Activated CD8-positive, alpha-beta T cell treated with anti-CD3 and anti-CD28 coated beads, Interleukin-2, amount 10 ng/mL, durations not matched to agents 7 days and 5 days (primary cell): ENCODE measurements at regions of chr10 and their contacts with region 1.

Region 1: DNA sequence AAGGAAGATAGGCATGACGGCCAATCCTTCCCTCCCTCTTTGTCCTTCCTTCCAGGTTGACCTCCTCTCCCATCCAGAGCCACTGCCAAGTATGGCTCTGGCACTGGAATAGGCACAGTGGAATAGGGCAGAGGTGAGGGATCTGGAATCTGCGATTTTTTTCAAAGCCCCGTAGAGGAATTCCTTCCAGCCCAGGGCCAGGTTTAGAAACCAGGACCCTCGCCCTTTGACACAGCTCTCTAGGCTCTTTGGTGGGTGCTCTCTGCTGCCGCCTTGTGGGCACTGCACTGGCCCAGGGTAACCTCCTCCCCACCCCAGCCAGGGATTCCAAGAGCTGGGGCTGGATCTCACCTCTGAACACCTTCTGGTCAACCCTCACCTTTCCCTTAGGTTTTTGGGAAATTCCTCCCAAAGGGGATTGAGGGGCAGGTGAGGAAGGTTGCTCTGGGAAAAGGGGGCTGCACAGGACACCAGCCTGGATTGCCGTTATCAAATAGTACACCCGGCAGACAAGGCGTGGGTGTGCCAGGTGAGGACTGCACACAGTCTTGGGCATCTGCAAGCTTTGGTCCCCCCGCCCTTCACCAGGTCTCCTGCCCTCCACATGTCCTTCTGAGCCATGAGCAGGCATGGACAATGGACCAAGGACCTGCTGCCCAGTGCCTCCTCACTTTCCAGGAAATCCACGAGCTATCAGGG is 22.8 kb downstream of the C10orf105 start:
- DNase-seq: peak; percentile 72
- ATAC-seq: peak; percentile 67
- H3K4me3 Mint-ChIP-seq: no peak overlapping the region
- H3K27ac Mint-ChIP-seq: peak overlapping the region; percentile 52
- H3K4me1 Mint-ChIP-seq: peaks cover 68% of the 10 kb centered on the region
- H3K27me3 Mint-ChIP-seq: no peaks in the 10 kb centered on the region

Region 2: GRCh38 chr10:71319042-71319799 is 377.6 kb before region 1 on chr10 and contains the start of gene SLC29A3:
- CTCF ChIA-PET with region 1: interaction called, 29 read pairs
- POLR2A ChIA-PET with region 1: no interaction called
- DNase-seq: peak; percentile 90
- ATAC-seq: peak; percentile 96
- H3K4me3 Mint-ChIP-seq: peak within 1 kb of the TSS; percentile 88
- H3K27ac Mint-ChIP-seq: peak within 1 kb of the TSS; percentile 75
- H3K4me1 Mint-ChIP-seq: peaks cover 37% of the 10 kb centered on the region
- H3K27me3 Mint-ChIP-seq: peaks cover 3% of the 10 kb centered on the region
- total RNA-seq, gene SLC29A3: 3.0 to 3.4 TPM

Region 3: GRCh38 chr10:71663311-71663710 is 33.5 kb before region 1 on chr10:
- CTCF ChIA-PET with region 1: interaction called, 10 read pairs
- POLR2A ChIA-PET with region 1: no interaction called
- DNase-seq: no peak
- ATAC-seq: no peak
- H3K4me3 Mint-ChIP-seq: no peak overlapping the region
- H3K27ac Mint-ChIP-seq: no peak overlapping the region
- H3K4me1 Mint-ChIP-seq: peaks cover 29% of the 10 kb centered on the region
- H3K27me3 Mint-ChIP-seq: peaks cover 4% of the 10 kb centered on the region

Region 4: GRCh38 chr10:71713135-71714030 is 16.6 kb after region 1 on chr10:
- CTCF ChIA-PET with region 1: interaction called, 121 read pairs
- POLR2A ChIA-PET with region 1: interaction called, 5 read pairs
- DNase-seq: peak; percentile 50
- ATAC-seq: peak; percentile 72
- H3K4me3 Mint-ChIP-seq: peak overlapping the region; percentile 80
- H3K27ac Mint-ChIP-seq: peak overlapping the region; percentile 99
- H3K4me1 Mint-ChIP-seq: peaks cover 68% of the 10 kb centered on the region
- H3K27me3 Mint-ChIP-seq: no peaks in the 10 kb centered on the region

Region 5: GRCh38 chr10:71748671-71749191 is 52.0 kb after region 1 on chr10:
- CTCF ChIA-PET with region 1: interaction called, 27 read pairs
- POLR2A ChIA-PET with region 1: interaction called, 6 read pairs
- DNase-seq: peak; percentile 94
- ATAC-seq: peak; percentile 83
- H3K4me3 Mint-ChIP-seq: peak overlapping the region; percentile 61
- H3K27ac Mint-ChIP-seq: peak overlapping the region; percentile 93
- H3K4me1 Mint-ChIP-seq: peaks cover 98% of the 10 kb centered on the region
- H3K27me3 Mint-ChIP-seq: no peaks in the 10 kb centered on the region

Region 6: DNA sequence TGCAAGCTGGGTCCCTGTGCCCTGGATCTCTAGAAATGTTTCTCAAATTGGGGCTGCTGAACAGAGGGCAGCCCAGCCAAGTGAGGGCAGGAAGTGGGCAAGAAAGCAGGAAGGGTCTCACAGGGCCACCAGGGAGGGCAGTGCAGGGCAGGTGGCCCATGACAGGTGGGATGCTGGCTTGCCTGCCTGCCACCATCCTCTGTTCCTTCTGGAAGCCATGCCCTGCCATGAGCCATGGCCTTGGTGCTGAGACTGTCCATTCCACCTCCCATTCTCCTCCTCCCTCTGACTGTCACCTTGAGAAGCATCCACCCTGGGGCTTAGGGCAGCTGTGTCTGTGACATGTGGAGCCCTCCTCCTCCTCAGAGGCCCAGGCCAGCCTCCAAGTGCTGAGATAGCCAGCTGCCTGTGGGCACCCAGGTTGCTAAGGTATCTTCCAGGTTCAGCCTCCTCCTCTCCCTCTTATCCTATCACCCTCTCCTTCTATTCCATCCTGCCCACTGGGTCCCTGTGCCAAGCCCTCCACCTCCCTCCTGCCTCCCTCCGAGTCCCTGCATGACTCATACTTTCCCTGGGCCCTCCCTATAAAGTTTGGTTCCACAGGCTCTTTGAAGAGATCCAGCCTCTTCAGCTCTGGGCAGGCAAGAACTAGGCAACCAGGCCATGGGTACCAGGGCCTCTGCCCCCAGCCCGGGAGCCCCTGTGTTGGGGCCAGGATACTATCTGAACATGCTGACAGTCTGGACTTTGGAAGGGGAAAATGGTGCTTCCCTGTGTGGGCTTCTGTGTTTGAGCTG is 75.2 kb after region 1 on chr10:
- CTCF ChIA-PET with region 1: interaction called, 54 read pairs
- POLR2A ChIA-PET with region 1: interaction called, 9 read pairs
- DNase-seq: peak; percentile 58
- ATAC-seq: peak; percentile 7
- H3K4me3 Mint-ChIP-seq: peak overlapping the region; percentile 80
- H3K27ac Mint-ChIP-seq: peak overlapping the region; percentile 89
- H3K4me1 Mint-ChIP-seq: peaks cover 81% of the 10 kb centered on the region
- H3K27me3 Mint-ChIP-seq: no peaks in the 10 kb centered on the region